Psoas muscle (tissue), 8 donors: ENCODE measurements at regions of chr13 and their contacts with region 1.

Region 1: DNA sequence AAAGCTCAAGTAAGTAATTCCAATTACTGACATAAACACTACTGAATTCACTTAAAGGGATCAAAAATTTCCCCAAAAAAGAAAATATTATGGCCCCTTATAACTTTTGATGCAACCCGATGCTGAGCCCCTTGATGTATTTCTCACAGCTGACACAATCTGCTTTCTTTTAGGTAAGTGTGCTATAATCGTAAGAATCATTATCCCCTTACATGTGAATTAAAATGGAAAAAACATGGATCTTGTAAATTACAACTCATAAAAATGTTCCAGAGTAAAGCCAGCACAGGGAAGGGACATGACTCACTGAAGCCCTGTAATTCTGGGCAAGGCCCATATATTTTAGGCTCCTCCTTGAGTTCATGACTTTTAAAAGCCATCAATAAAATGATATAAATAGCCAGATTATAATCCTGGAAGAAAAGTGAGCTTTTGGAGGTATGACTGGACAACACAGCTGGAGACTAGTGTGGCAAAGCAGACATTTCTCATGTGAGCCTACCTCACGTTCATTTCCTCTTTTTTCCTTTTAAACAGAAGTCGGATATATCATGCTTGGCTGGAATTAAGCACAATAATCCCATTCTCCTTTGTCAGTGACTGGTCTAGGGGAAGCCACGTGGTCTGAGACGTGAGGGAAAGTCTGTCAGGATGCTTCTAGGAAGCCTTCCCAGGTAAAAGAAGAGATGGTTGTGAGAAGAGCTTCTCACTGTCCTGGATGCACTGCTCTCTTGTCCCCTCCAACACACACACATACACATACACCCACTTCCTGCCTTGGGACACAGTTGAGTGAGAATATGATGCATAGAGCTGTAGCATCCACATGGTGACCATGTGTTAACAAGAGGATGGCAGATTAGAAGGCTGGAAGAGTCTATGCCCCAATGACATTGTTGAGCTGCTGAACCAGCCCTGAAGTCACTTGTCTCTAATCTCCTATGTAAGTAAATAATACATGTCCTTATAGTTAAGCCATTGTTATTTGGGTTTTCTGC is 165.4 kb downstream of the RGCC start:
- DNase-seq: no peak
- ATAC-seq: peak in 3 of 4 donors; percentile 71 to 86 (median 72)
- H3K4me3 ChIP-seq: no peak overlapping the region
- H3K27ac ChIP-seq: no peak overlapping the region
- H3K4me1 ChIP-seq: no peaks in the 10 kb centered on the region
- H3K27me3 ChIP-seq: no peaks in the 10 kb centered on the region
- CTCF ChIP-seq: no peak

Region 2: GRCh38 chr13:41595298-41595697 is 27.4 kb before region 1 on chr13:
- intact Hi-C with region 1: loop called in 1 of 2 experiments (anchors 2 kb)
- DNase-seq: no peak
- ATAC-seq: no peak
- H3K4me3 ChIP-seq: no peak overlapping the region
- H3K27ac ChIP-seq: no peak overlapping the region
- H3K4me1 ChIP-seq: no peaks in the 10 kb centered on the region
- H3K27me3 ChIP-seq: no peaks in the 10 kb centered on the region
- CTCF ChIP-seq: no peak

Region 3: GRCh38 chr13:42119875-42120274 is 497.1 kb after region 1 on chr13:
- intact Hi-C with region 1: no loop called
- DNase-seq: no peak
- ATAC-seq: no peak
- H3K4me3 ChIP-seq: no peak overlapping the region
- H3K27ac ChIP-seq: no peak overlapping the region
- H3K4me1 ChIP-seq: no peaks in the 10 kb centered on the region
- H3K27me3 ChIP-seq: no peaks in the 10 kb centered on the region
- CTCF ChIP-seq: no peak